ENCODE measurements at regions of chr14 and their contacts with region 1.

Region 1: DNA sequence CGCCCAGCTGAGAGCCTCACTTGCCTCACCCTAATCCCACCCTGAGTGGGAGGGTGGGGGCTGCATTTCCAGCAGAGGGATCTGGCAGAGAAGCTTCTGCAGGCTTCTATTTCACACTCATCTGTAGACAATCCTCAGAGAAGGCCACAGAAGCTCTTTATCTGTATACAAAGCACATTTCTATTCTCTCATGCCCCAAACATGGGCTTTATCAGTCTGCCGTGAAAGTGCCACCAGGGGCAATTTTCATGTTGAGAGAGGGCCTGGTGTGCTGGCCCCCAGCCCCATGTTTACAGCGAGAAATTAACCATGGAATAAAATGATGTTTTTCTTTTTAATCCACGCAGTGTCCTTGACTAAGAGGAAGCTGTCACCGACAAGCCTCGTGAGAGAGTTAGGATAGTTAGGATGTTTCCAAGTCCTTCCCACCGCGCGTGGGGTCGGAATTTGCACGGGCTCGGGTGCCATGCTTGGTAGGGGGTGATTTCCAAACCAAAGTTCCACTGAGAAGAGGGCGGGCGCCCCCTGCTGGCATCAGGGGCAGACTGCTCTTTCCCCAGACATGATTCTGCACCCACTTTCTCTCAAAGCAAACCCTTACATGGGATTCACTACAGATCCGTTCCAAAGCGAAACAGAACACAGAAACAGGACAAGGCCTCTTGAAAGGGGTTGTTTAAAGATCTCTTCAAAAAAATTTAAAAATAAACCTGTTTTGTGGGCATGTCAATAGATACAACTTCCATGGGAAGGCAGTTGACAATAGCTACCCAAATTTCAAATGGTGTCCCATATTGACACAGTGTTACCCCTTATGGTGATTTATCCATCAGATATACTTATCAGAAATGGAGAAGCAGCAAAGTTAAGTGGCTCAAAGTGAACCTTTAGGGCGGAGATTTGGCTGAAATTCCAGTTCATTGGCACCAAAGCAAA is 19.4 kb downstream of the BDKRB1 start:
- DNase-seq: peak; percentile 75 to 88
- H3K4me3 ChIP-seq: no peak overlapping the region
- H3K27ac ChIP-seq: peak overlapping the region in 4 of 5 donors; percentile 33 to 68 (median 48)
- H3K4me1 ChIP-seq: peaks cover 6 to 21% (median 16%) of the 10 kb centered on the region in 4 donors
- H3K27me3 ChIP-seq: no peaks in the 10 kb centered on the region
- CTCF ChIP-seq: peak in 5 of 7 experiments; percentile 84 to 91 (median 90)
- EP300 ChIP-seq: no peak
- POLR2A ChIP-seq: no peak

Region 2: GRCh38 chr14:96100161-96101029 is 175.1 kb before region 1 on chr14:
- intact Hi-C with region 1: loop called (anchors 5 kb)
- DNase-seq: peak; percentile 77 to 91
- H3K4me3 ChIP-seq: no peak overlapping the region
- H3K27ac ChIP-seq: peak overlapping the region in 1 of 5 donors; percentile 92
- H3K4me1 ChIP-seq: peaks cover 8 to 51% (median 24%) of the 10 kb centered on the region in 4 donors
- H3K27me3 ChIP-seq: peaks cover 0 to 8% (median 0%) of the 10 kb centered on the region in 3 donors
- CTCF ChIP-seq: peak in 5 of 7 experiments; percentile 60 to 93 (median 81)
- EP300 ChIP-seq: no peak
- POLR2A ChIP-seq: no peak

Region 3: DNA sequence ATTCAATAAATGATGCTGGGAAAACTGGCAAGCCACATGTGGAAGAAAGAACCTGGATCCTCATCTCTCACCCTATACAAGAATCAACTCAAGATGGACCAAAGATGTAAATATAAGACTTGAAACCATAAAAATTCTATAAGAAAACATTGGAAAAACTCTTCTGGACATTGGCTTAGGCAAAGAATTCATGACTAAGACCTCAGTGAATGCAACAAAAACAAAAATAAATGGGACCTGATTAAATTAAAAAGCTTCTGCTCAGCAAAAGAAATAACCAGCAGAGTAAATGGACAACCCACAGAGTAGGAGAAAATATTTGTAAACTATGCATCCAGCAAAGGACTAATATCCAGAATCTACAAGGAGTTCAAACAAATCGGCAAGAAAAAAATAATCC is 63.1 kb after region 1 on chr14:
- intact Hi-C with region 1: no loop called
- DNase-seq: no peak
- H3K4me3 ChIP-seq: no peak overlapping the region
- H3K27ac ChIP-seq: no peak overlapping the region
- H3K4me1 ChIP-seq: no peaks in the 10 kb centered on the region
- H3K27me3 ChIP-seq: no peaks in the 10 kb centered on the region
- CTCF ChIP-seq: no peak
- EP300 ChIP-seq: no peak
- POLR2A ChIP-seq: no peak